Dorsolateral prefrontal cortex (tissue), 120 donors: ENCODE measurements at regions of chr2 and their contacts with region 1.

Region 1: GRCh38 chr2:54704688-54705605 is 18.5 kb upstream of the EML6 start:
- DNase-seq: no peak
- H3K4me3 ChIP-seq: no peak overlapping the region
- H3K27ac ChIP-seq: peak overlapping the region in 27 of 59 donors; percentile 2 to 74 (median 32)
- H3K27me3 ChIP-seq: no peaks in the 10 kb centered on the region
- CTCF ChIP-seq: peak; percentile 40 to 94 (median 76)

Region 2: GRCh38 chr2:53829273-53829979 is 875.5 kb before region 1 on chr2:
- intact Hi-C with region 1: no loop called
- DNase-seq: no peak
- H3K4me3 ChIP-seq: no peak overlapping the region
- H3K27ac ChIP-seq: peak overlapping the region in 56 of 59 donors; percentile 20 to 98 (median 87)
- H3K27me3 ChIP-seq: no peaks in the 10 kb centered on the region
- CTCF ChIP-seq: no peak

Region 3: GRCh38 chr2:54115284-54116137 is 589.4 kb before region 1 on chr2 and contains the start of gene ACYP2:
- intact Hi-C with region 1: loop called (anchors 5 to 10 kb)
- DNase-seq: peak; percentile 86 to 95 (median 92)
- H3K4me3 ChIP-seq: peak within 1 kb of the TSS; percentile 59 to 93 (median 80)
- H3K27ac ChIP-seq: peak within 1 kb of the TSS; percentile 94 to 100 (median 100)
- H3K27me3 ChIP-seq: no peaks in the 10 kb centered on the region
- CTCF ChIP-seq: peak in 42 of 56 donors; percentile 7 to 53 (median 32)
- total RNA-seq, gene ACYP2: 51.6 to 88.2 (median 68.5) TPM

Region 4: DNA sequence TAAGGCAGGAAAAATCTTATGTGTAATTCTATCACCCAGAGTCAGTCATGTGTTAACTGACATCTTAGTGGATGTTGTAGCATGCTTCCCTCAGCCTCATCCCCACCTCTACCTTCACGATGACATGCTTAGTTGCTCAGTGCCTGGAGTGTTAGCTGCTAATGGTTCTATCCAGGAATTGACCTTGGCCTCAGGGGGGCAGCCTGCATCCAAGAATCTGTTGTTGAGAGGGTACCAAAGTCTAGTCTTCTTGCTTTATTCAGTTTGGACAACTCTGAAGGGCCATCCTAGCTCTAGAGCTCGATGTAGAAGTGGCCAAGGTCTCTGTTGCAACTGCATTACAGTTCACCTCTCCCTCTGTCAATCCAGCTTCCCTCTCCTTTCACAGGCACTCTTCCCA is 528.4 kb before region 1 on chr2:
- intact Hi-C with region 1: loop called in 1 of 2 experiments (anchors 5 kb)
- DNase-seq: peak in 8 of 10 donors; percentile 32 to 58 (median 54)
- H3K4me3 ChIP-seq: no peak overlapping the region
- H3K27ac ChIP-seq: no peak overlapping the region
- H3K27me3 ChIP-seq: no peaks in the 10 kb centered on the region
- CTCF ChIP-seq: peak in 55 of 56 donors; percentile 21 to 76 (median 48)

Region 5: GRCh38 chr2:54522624-54523281 is 182.2 kb before region 1 on chr2:
- intact Hi-C with region 1: loop called (anchors 5 to 10 kb)
- DNase-seq: peak in 1 of 10 donors; percentile 44
- H3K4me3 ChIP-seq: no peak overlapping the region
- H3K27ac ChIP-seq: peak overlapping the region in 15 of 59 donors; percentile 3 to 69 (median 45)
- H3K27me3 ChIP-seq: no peaks in the 10 kb centered on the region
- CTCF ChIP-seq: peak; percentile 38 to 79 (median 66)

Region 6: DNA sequence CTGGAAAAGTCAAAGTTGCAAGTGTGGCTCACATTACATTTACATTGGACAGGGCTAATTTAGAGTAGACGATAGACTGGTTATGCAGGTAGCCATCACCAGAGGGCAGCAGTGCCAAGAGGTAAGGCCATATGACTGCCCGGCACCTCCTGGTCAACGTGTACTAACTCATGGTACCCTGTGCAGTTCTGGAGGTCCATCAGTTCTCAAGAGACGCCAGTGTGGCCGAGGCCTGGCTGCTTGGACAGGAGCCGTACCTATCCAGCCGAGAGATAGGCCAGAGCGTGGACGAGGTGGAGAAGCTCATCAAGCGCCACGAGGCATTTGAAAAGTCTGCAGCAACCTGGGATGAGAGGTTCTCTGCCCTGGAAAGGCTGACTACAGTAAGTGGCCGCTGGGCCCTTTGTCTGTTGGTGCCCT is 47.3 kb before region 1 on chr2:
- intact Hi-C with region 1: loop called in 1 of 2 experiments (anchors 5 kb)
- DNase-seq: peak in 3 of 10 donors; percentile 58 to 66 (median 61)
- H3K4me3 ChIP-seq: no peak overlapping the region
- H3K27ac ChIP-seq: peak overlapping the region in 57 of 59 donors; percentile 18 to 90 (median 78)
- H3K27me3 ChIP-seq: no peaks in the 10 kb centered on the region
- CTCF ChIP-seq: peak in 55 of 56 donors; percentile 29 to 71 (median 55)

Region 7: DNA sequence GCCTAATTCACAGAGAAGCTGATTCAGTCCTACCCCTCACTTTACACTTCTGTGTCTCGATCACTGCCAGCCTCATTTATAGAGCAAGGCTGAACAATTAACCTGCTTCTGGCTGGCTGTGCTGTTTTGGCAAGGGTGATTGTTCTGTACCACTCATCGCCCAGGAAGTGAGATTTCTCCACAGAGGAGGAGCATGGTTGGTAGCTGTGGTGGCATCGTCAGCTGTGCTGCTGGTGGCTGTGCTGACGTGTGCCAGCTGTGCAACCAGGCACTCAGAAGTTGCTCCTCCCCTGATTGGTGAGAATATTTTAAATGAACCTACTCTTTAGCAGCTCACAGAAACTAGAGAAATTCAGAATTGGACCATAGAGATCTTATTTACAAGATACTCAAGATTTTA is 176.8 kb after region 1 on chr2:
- intact Hi-C with region 1: no loop called
- DNase-seq: peak in 2 of 10 donors; percentile 33 to 53
- H3K4me3 ChIP-seq: no peak overlapping the region
- H3K27ac ChIP-seq: peak overlapping the region in 3 of 59 donors; percentile 40 to 59 (median 44)
- H3K27me3 ChIP-seq: no peaks in the 10 kb centered on the region
- CTCF ChIP-seq: no peak